MCF 10A (cell line): ENCODE measurements at regions of chr17 and their contacts with region 1.

Region 1: DNA sequence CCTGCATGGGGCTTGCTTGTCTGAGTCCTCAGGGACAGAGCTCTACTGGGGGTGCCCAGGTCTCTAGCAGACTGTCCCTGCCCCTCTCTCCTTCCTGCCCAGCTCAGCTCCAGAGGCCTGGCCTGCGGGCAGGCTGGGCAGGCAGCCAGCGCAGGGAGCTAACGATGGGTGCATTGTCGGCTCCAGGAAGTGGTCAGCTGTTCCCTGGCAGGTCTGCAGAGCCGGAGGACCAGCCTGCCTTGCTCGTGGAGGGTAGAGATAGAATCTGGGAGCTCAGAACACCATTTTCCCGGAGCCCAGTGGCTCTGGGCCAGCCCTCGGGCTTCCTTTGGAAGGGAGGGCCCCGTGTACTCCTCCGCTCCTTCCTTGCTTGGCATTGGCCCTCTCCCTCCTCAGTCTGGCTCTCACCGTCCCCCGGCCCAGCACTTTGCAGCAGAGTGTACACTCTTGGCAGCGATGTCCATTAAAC is 189.6 kb downstream of the RAB11FIP4 start:
- DNase-seq: peak; percentile 91
- H3K4me3 Mint-ChIP-seq: peak overlapping the region; percentile 37
- H3K27ac Mint-ChIP-seq: peak overlapping the region; percentile 54
- H3K4me1 Mint-ChIP-seq: peaks cover 53% of the 10 kb centered on the region
- H3K27me3 Mint-ChIP-seq: no peaks in the 10 kb centered on the region
- CTCF ChIP-seq: no peak

Region 2: GRCh38 chr17:31596382-31597323 is 15.6 kb after region 1 on chr17:
- CTCF ChIA-PET with region 1: no interaction called
- POLR2A ChIA-PET with region 1: interaction called, 14 read pairs
- intact Hi-C with region 1: loop called (anchors 1 kb)
- DNase-seq: peak; percentile 93
- H3K4me3 Mint-ChIP-seq: no peak overlapping the region
- H3K27ac Mint-ChIP-seq: peak overlapping the region; percentile 96
- H3K4me1 Mint-ChIP-seq: peaks cover 30% of the 10 kb centered on the region
- H3K27me3 Mint-ChIP-seq: no peaks in the 10 kb centered on the region
- CTCF ChIP-seq: no peak